Activated CD8-positive, alpha-beta T cell treated with anti-CD3 and anti-CD28 coated beads, Interleukin-2, amount 10 ng/mL, durations not matched to agents 7 days and 5 days (primary cell): ENCODE measurements at regions of chr4 and their contacts with region 1.

Region 1: GRCh38 chr4:150867148-150867547 is 147.9 kb downstream of the LRBA start:
- DNase-seq: peak; percentile 58
- ATAC-seq: peak; percentile 79
- H3K4me3 Mint-ChIP-seq: no peak overlapping the region
- H3K27ac Mint-ChIP-seq: no peak overlapping the region
- H3K4me1 Mint-ChIP-seq: no peaks in the 10 kb centered on the region
- H3K27me3 Mint-ChIP-seq: no peaks in the 10 kb centered on the region

Region 2: GRCh38 chr4:150297861-150298474 is 569.2 kb before region 1 on chr4:
- CTCF ChIA-PET with region 1: interaction called, 48 read pairs
- POLR2A ChIA-PET with region 1: no interaction called
- DNase-seq: peak; percentile 56
- ATAC-seq: no peak
- H3K4me3 Mint-ChIP-seq: no peak overlapping the region
- H3K27ac Mint-ChIP-seq: no peak overlapping the region
- H3K4me1 Mint-ChIP-seq: no peaks in the 10 kb centered on the region
- H3K27me3 Mint-ChIP-seq: no peaks in the 10 kb centered on the region

Region 3: GRCh38 chr4:150828159-150828558 is 39.0 kb before region 1 on chr4:
- CTCF ChIA-PET with region 1: interaction called, 11 read pairs
- POLR2A ChIA-PET with region 1: no interaction called
- DNase-seq: peak; percentile 38
- ATAC-seq: peak; percentile 91
- H3K4me3 Mint-ChIP-seq: peak overlapping the region; percentile 50
- H3K27ac Mint-ChIP-seq: peak overlapping the region; percentile 75
- H3K4me1 Mint-ChIP-seq: peaks cover 7% of the 10 kb centered on the region
- H3K27me3 Mint-ChIP-seq: no peaks in the 10 kb centered on the region

Region 4: GRCh38 chr4:150855981-150856510 is 11.1 kb before region 1 on chr4:
- CTCF ChIA-PET with region 1: interaction called, 23 read pairs
- POLR2A ChIA-PET with region 1: no interaction called
- DNase-seq: no peak
- ATAC-seq: no peak
- H3K4me3 Mint-ChIP-seq: no peak overlapping the region
- H3K27ac Mint-ChIP-seq: no peak overlapping the region
- H3K4me1 Mint-ChIP-seq: no peaks in the 10 kb centered on the region
- H3K27me3 Mint-ChIP-seq: no peaks in the 10 kb centered on the region